Activated CD4-positive, alpha-beta T cell treated with anti-CD3 and anti-CD28 coated beads, Interleukin-2, amount 10 ng/mL, durations not matched to agents 24 days and 14 days (primary cell): ENCODE measurements at regions of chr4 and their contacts with region 1.

Region 1: GRCh38 chr4:40149960-40150385 is 46.9 kb upstream of the RHOH start:
- DNase-seq: peak; percentile 92
- H3K4me3 Mint-ChIP-seq: no peak overlapping the region
- H3K27ac Mint-ChIP-seq: peak overlapping the region; percentile 22
- H3K4me1 Mint-ChIP-seq: peaks cover 6% of the 10 kb centered on the region
- H3K27me3 Mint-ChIP-seq: no peaks in the 10 kb centered on the region

Region 2: GRCh38 chr4:40199999-40200874 is 50.3 kb after region 1 on chr4:
- intact Hi-C with region 1: loop called (anchors 1 kb)
- DNase-seq: peak; percentile 93
- H3K4me3 Mint-ChIP-seq: peak overlapping the region; percentile 93
- H3K27ac Mint-ChIP-seq: peak overlapping the region; percentile 94
- H3K4me1 Mint-ChIP-seq: peaks cover 44% of the 10 kb centered on the region
- H3K27me3 Mint-ChIP-seq: no peaks in the 10 kb centered on the region

Region 3: GRCh38 chr4:40325189-40326019 is 175.4 kb after region 1 on chr4:
- intact Hi-C with region 1: loop called (anchors 1 kb)
- DNase-seq: peak; percentile 90
- H3K4me3 Mint-ChIP-seq: no peak overlapping the region
- H3K27ac Mint-ChIP-seq: no peak overlapping the region
- H3K4me1 Mint-ChIP-seq: peaks cover 31% of the 10 kb centered on the region
- H3K27me3 Mint-ChIP-seq: no peaks in the 10 kb centered on the region